ENCODE measurements at regions of chr1 and their contacts with region 1.

Region 1: DNA sequence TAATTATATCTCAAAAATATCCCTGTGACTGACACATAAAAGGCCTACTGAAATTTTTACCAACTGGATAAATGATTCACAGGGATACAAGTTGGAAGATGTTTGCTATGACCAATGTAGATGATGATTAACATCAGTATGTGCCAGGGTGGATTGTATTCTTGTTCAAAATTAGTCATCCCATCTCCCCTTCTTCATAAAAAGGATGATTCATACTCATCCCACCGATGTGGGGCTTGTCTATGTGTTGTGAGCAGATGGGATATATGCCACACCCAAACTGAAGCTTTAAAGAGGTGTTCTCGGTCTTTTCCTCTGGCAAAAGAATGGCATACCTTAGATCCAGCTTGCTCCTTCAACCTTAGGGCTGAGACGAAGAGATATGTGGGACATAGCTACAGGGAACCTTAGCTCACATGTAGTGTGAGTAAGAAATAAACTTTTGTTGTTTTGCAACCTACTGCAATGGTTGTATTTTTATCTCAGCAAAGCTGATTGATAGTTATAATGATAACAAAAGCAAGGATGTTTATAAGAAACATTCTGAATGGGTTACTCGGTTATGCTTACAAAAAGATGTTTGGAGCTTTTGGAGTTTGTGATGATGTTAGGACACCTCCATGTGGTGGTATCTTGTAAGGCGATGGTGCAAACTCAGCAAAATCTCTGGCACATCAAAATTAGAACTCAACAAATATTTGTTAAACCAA is 29.4 kb downstream of the SPATA17 start:
- DNase-seq: peak; percentile 71 to 82
- ATAC-seq: peak; percentile 96 to 97
- H3K4me3 ChIP-seq: no peak overlapping the region
- H3K27ac ChIP-seq: peak overlapping the region; percentile 51 to 54; a peak in 5 of 6 replicates
- H3K4me1 ChIP-seq: peaks cover 21% of the 10 kb centered on the region
- CTCF ChIP-seq: peak; percentile 60
- EP300 ChIP-seq: 0 out of 5 replicates have a peak, but pooled peaks of 1 of the 2 experiments have one; percentile 10
- POLR2A ChIP-seq: no peak
- RAD21 ChIP-seq: peak; percentile 71 to 73

Region 2: DNA sequence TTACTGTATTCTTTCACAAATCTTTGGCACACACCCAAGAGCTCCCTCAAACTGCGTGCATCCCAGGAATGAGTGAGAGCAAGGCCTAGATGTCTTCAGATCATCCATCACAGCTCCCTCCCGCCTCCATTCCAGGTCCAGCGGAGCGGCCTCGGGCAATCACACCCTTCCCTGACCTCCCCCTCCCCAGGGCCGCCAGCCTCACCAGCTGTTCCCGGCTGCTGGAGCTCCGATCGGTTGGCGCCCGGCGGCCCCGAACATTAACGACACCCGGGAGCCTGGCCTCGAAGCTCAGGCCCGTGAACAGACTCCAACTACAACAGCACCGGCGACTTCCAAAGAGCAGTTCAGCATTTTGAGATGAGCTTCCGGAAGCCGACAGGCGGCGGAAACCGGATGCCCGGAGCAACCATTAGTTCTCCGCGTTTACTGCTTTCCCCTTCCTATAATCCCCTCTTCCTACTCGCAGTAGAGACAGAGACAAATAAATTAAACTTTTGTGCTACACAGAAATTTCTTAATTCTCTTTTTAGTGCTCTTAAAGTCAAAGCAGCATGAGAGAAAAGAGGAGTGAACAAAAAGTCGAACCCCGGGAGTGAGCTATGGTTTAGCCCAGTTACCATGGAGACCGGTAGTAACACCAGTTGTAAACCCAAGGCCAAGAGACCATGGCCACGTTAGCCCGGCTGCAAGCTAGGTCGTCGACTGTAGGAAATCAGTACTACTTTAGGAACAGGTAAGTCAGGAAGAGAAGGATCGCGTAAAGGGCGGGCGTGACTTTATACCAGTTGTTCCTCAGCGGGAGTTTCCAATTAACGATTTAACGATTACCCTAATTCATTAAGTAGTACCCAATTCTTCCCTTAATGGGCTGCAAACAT is 29.6 kb before region 1 on chr1 and contains the starts of genes GPATCH2 and SPATA17:
- CTCF ChIA-PET with region 1: interaction called, 5 read pairs
- POLR2A ChIA-PET with region 1: interaction called, 11 read pairs
- DNase-seq: peak; percentile 86 to 92
- ATAC-seq: peak; percentile 97 to 98
- H3K4me3 ChIP-seq: peak within 1 kb of the TSS; percentile 63
- H3K27ac ChIP-seq: peak within 1 kb of the TSS; percentile 94 to 98
- H3K4me1 ChIP-seq: peaks cover 16% of the 10 kb centered on the region; the same call in 2 of the 3 replicates
- CTCF ChIP-seq: no peak
- EP300 ChIP-seq: no peak
- POLR2A ChIP-seq: peak; percentile 58
- RAD21 ChIP-seq: no peak
- polyA plus RNA-seq, gene GPATCH2: 13.1 and 18.6 TPM in 2 replicates
- polyA plus RNA-seq, gene SPATA17: 3.7 and 5.0 TPM in 2 replicates

Region 3: GRCh38 chr1:217673387-217673786 is 12.9 kb after region 1 on chr1:
- CTCF ChIA-PET with region 1: interaction called, 13 read pairs
- POLR2A ChIA-PET with region 1: no interaction called
- DNase-seq: no peak
- ATAC-seq: no peak
- H3K4me3 ChIP-seq: no peak overlapping the region
- H3K27ac ChIP-seq: no peak overlapping the region
- H3K4me1 ChIP-seq: no peaks in the 10 kb centered on the region
- CTCF ChIP-seq: no peak
- EP300 ChIP-seq: no peak
- POLR2A ChIP-seq: no peak
- RAD21 ChIP-seq: no peak

Region 4: DNA sequence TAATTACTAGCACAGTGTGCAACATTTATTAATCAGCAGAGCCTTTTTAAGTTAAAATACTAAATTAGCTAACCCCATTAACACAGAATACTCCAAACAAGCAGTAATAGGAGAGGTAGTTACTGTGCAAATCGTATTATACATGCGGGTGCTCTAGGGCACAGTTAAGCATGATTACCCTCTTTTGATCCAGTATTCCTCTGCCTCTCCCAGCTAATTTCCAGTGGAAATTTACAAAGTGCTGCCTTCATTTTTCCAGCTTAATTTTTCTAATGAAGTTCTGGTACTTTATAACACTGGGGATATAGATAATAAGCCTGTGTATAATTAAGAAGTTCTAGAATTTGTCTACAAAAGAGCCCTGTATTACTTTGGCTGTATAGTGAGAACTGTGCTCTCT is 130.6 kb after region 1 on chr1:
- CTCF ChIA-PET with region 1: no interaction called
- POLR2A ChIA-PET with region 1: no interaction called
- DNase-seq: no peak
- ATAC-seq: no peak
- H3K4me3 ChIP-seq: no peak overlapping the region
- H3K27ac ChIP-seq: no peak overlapping the region
- H3K4me1 ChIP-seq: no peaks in the 10 kb centered on the region
- CTCF ChIP-seq: no peak
- EP300 ChIP-seq: no peak
- POLR2A ChIP-seq: no peak
- RAD21 ChIP-seq: no peak